Psoas muscle (tissue), 8 donors: ENCODE measurements at regions of chr1 and their contacts with region 1.

Region 1: DNA sequence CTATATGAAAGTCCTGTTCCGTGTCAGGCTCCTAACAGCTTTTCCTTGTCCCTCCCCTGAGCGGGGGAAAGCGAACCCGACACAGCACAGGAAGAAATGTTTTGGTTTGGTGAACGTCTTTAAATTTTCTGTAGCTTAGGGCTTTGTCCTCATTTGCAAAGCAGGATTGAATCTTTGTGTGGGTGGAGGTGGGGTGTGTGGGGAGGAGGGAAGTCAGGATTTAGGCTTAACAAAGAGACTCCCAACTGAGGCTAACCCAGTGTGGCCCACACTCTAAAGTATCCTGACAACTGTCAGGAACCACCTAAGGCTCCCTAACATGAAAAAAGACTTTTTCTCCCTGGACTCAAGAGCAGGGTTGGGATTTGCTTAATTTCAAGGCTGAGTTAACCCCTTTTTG is 376.2 kb upstream of the C1orf174 start:
- DNase-seq: no peak
- ATAC-seq: no peak
- H3K4me3 ChIP-seq: no peak overlapping the region
- H3K27ac ChIP-seq: no peak overlapping the region
- H3K4me1 ChIP-seq: no peaks in the 10 kb centered on the region
- H3K27me3 ChIP-seq: peaks cover 0 to 11% (median 6%) of the 10 kb centered on the region in 3 donors
- CTCF ChIP-seq: no peak

Region 2: DNA sequence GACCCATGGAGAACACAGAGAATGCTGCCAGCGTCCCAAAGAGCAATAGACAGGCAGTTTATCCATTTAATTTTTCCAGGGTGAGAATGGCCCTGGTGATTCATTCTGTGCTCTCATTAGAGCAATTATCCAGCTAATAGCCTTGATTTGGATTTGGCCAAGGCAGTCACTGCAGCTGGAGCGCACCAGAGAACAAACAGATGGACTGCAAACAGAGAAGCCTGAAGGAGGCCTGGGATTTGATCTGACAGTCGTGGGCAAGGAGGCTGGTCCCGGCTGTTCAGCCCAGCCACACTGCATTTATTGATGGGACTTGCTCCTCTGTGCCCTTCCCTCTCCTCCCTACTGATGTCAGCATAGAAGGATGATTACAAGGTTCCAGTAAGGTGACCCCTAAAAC is 22.3 kb before region 1 on chr1:
- intact Hi-C with region 1: no loop called
- DNase-seq: no peak
- ATAC-seq: no peak
- H3K4me3 ChIP-seq: no peak overlapping the region
- H3K27ac ChIP-seq: no peak overlapping the region
- H3K4me1 ChIP-seq: no peaks in the 10 kb centered on the region
- H3K27me3 ChIP-seq: peaks cover 3 to 4% (median 4%) of the 10 kb centered on the region in 3 donors
- CTCF ChIP-seq: no peak

Region 3: GRCh38 chr1:4292861-4293260 is 16.6 kb after region 1 on chr1:
- intact Hi-C with region 1: loop called in 1 of 2 experiments (anchors 1 kb)
- DNase-seq: no peak
- ATAC-seq: no peak
- H3K4me3 ChIP-seq: no peak overlapping the region
- H3K27ac ChIP-seq: no peak overlapping the region
- H3K4me1 ChIP-seq: no peaks in the 10 kb centered on the region
- H3K27me3 ChIP-seq: peaks cover 0 to 4% (median 0%) of the 10 kb centered on the region in 3 donors
- CTCF ChIP-seq: no peak

Region 4: GRCh38 chr1:4330805-4331766 is 54.8 kb after region 1 on chr1:
- intact Hi-C with region 1: no loop called
- DNase-seq: no peak
- ATAC-seq: no peak
- H3K4me3 ChIP-seq: no peak overlapping the region
- H3K27ac ChIP-seq: no peak overlapping the region
- H3K4me1 ChIP-seq: no peaks in the 10 kb centered on the region
- H3K27me3 ChIP-seq: peaks cover 0 to 1% (median 0%) of the 10 kb centered on the region in 3 donors
- CTCF ChIP-seq: no peak

Region 5: GRCh38 chr1:4627353-4627752 is 351.1 kb after region 1 on chr1:
- intact Hi-C with region 1: no loop called
- DNase-seq: no peak
- ATAC-seq: no peak
- H3K4me3 ChIP-seq: no peak overlapping the region
- H3K27ac ChIP-seq: no peak overlapping the region
- H3K4me1 ChIP-seq: no peaks in the 10 kb centered on the region
- H3K27me3 ChIP-seq: peaks cover 0 to 1% (median 0%) of the 10 kb centered on the region in 3 donors
- CTCF ChIP-seq: no peak